HCT116 (cell line): ENCODE measurements at regions of chrX and their contacts with region 1.

Region 1: DNA sequence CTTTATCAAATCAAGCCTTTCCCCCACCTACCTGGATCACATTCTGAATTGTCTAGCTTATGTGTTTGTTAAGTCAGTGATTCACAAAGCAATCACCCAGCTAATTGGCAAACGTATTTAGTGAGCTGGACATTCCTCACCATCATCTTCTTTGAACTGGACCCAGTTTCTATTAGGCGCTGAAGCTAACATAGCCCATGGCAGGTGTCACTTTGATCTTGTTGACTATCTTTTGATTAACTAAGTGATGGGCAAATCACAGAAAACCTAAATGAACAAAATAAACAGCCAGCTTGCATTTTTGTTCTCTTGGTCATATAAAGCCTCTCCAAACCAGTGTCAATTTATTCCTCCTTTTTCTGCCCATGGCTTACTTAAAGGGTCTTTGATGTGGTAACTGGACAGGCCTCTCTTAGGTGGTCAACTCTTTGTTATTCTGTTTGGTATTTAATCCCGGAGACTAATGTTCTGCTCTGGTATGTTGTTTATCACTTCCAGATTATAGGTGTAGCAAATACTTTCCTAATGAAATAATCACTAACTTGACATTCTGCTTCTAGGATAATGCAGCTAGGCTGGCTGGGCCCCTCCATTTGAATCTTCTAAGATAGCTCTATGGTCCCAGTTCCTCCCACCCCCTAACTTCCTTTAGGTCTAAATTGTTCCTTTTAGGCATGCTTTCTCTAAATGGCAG is 105.3 kb upstream of the SMIM10 start:
- DNase-seq: peak; percentile 89
- ATAC-seq: peak; percentile 74
- H3K4me3 ChIP-seq: peak overlapping the region in 1 of 2 experiments; percentile 22; a peak in 1 of 4 replicates
- H3K27ac ChIP-seq: peak overlapping the region; percentile 98
- H3K4me1 ChIP-seq: peaks cover 58 to 74% of the 10 kb centered on the region in 2 experiments
- H3K27me3 ChIP-seq: no peaks in the 10 kb centered on the region
- CTCF ChIP-seq: no peak
- POLR2A ChIP-seq: no peak
- RAD21 ChIP-seq: no peak

Region 2: DNA sequence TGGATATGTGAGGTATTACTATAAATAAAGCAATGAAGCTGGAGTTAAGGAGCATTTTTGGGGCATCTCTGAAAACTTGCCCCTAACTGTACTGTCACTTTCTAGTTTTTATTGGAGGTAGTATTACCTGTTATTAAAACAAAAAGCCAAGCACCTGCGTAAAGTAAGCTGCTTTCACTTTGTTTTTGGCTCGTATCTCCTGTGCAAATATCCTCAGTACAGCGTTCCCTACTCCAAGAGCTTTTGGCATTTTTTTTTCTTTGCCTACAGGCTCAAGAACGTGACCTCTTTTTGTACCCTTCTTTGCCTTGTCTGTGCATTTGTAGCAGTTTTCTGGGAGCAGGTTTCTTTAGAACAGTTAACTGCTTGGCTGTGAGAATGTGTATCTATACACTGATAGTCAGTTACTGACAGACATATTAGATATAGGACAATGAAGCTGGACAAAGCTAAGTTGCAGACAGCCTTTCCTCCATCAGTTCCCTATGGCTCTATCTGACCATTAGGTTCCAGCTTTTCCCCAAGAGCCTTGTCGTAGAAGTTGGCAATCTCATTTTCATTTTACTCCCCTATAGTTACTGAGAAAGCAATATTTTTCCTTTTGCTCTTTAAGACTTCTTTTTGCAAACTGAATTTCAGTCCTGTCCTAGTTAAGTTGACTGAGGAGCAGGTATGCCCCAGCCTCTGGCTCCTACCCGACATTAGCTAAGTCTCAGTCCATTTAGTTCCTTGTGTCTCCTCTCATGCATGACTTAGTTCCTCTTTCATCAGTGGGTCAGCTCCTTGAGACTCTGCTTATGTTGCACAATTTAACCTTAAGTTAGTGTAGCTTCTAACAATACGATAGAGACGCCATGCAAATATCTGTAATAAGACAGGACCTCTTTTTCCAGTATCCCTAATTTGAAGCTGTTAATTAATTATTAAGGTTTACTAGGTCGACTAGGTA is 497.0 kb before region 1 on chrX:
- CTCF ChIA-PET with region 1: no interaction called
- POLR2A ChIA-PET with region 1: no interaction called
- RAD21 ChIA-PET with region 1: no interaction called
- intact Hi-C with region 1: no loop called
- DNase-seq: no peak
- ATAC-seq: no peak
- H3K4me3 ChIP-seq: no peak overlapping the region
- H3K27ac ChIP-seq: no peak overlapping the region
- H3K4me1 ChIP-seq: no peaks in the 10 kb centered on the region
- H3K27me3 ChIP-seq: no peaks in the 10 kb centered on the region
- CTCF ChIP-seq: no peak
- POLR2A ChIP-seq: no peak
- RAD21 ChIP-seq: no peak

Region 3: GRCh38 chrX:134836497-134836968 is 49.0 kb before region 1 on chrX:
- CTCF ChIA-PET with region 1: no interaction called
- POLR2A ChIA-PET with region 1: interaction called, 4 read pairs
- RAD21 ChIA-PET with region 1: no interaction called
- intact Hi-C with region 1: loop called (anchors 1 kb)
- DNase-seq: peak; percentile 79
- ATAC-seq: peak; percentile 82
- H3K4me3 ChIP-seq: no peak overlapping the region
- H3K27ac ChIP-seq: peak overlapping the region; percentile 83
- H3K4me1 ChIP-seq: peaks cover 18 to 23% of the 10 kb centered on the region in 2 experiments
- H3K27me3 ChIP-seq: no peaks in the 10 kb centered on the region
- CTCF ChIP-seq: no peak
- POLR2A ChIP-seq: no peak
- RAD21 ChIP-seq: no peak

Region 4: GRCh38 chrX:134868771-134869495 is 16.6 kb before region 1 on chrX:
- CTCF ChIA-PET with region 1: no interaction called
- POLR2A ChIA-PET with region 1: no interaction called
- RAD21 ChIA-PET with region 1: no interaction called
- intact Hi-C with region 1: no loop called
- DNase-seq: no peak
- ATAC-seq: peak; percentile 66
- H3K4me3 ChIP-seq: no peak overlapping the region
- H3K27ac ChIP-seq: 0 out of 2 replicates have a peak overlapping the region, but pooled peaks have one; percentile 6
- H3K4me1 ChIP-seq: peaks cover 0 to 22% of the 10 kb centered on the region in 2 experiments; a peak in 2 of 4 replicates
- H3K27me3 ChIP-seq: no peaks in the 10 kb centered on the region
- CTCF ChIP-seq: no peak
- POLR2A ChIP-seq: no peak
- RAD21 ChIP-seq: no peak

Region 5: GRCh38 chrX:135213200-135213844 is 327.8 kb after region 1 on chrX:
- CTCF ChIA-PET with region 1: no interaction called
- POLR2A ChIA-PET with region 1: no interaction called
- RAD21 ChIA-PET with region 1: no interaction called
- intact Hi-C with region 1: no loop called
- DNase-seq: no peak
- ATAC-seq: no peak
- H3K4me3 ChIP-seq: no peak overlapping the region
- H3K27ac ChIP-seq: no peak overlapping the region
- H3K4me1 ChIP-seq: no peaks in the 10 kb centered on the region
- H3K27me3 ChIP-seq: no peaks in the 10 kb centered on the region
- CTCF ChIP-seq: no peak
- POLR2A ChIP-seq: no peak
- RAD21 ChIP-seq: no peak

Region 6: DNA sequence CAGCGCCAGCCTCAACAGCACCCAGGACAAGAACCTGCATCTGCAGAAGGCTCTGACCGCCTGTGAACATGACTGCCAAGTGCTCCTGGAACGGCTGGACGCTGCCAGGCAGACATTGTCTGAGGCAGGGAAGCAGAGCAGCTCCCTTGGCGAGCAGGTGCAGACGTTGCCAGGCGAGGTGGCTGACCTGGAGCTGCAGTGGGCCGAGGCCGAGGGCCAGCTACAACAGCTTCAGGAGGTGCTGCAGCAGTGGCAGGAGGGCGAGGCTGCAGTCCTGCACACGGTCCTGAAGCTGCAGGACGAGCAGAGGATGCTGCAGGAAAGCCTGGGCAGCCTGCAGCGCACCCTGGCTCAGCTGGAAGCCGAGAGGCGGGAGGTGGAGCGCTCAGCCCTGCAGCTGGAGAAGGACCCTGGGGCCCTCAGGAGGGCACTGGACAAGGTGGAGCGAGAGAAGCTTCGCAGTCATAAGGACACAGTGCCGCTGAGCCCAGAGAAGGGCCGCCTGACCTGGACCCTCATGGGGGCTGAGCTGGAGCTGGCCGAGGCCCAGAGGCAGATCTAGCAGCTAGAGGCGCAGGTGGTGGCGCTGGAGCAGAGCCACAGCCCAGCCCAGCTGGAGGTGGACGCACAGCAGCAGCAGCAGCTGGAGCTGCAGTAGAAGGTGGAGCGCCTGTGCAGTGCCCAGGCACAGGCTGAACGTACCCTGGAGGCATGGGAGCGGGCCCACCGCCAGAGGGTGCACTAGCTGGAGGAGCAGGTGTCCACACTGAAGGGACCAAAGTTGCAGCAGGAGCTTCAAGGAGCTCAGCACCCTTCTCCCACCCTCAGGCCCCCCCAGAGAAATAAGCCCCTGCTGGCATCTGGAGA is 552.6 kb after region 1 on chrX:
- CTCF ChIA-PET with region 1: no interaction called
- POLR2A ChIA-PET with region 1: no interaction called
- RAD21 ChIA-PET with region 1: no interaction called
- intact Hi-C with region 1: no loop called
- DNase-seq: no peak
- ATAC-seq: peak; percentile 91
- H3K4me3 ChIP-seq: no peak overlapping the region
- H3K27ac ChIP-seq: no peak overlapping the region
- H3K4me1 ChIP-seq: no peaks in the 10 kb centered on the region
- H3K27me3 ChIP-seq: no peaks in the 10 kb centered on the region
- CTCF ChIP-seq: peak in 2 of 3 experiments; percentile 33 to 52; a peak in 4 of 6 replicates
- POLR2A ChIP-seq: no peak
- RAD21 ChIP-seq: 0 out of 2 replicates have a peak, but pooled peaks have one; percentile 12